HepG2 (cell line): ENCODE measurements at regions of chr7 and their contacts with region 1.

Region 1: DNA sequence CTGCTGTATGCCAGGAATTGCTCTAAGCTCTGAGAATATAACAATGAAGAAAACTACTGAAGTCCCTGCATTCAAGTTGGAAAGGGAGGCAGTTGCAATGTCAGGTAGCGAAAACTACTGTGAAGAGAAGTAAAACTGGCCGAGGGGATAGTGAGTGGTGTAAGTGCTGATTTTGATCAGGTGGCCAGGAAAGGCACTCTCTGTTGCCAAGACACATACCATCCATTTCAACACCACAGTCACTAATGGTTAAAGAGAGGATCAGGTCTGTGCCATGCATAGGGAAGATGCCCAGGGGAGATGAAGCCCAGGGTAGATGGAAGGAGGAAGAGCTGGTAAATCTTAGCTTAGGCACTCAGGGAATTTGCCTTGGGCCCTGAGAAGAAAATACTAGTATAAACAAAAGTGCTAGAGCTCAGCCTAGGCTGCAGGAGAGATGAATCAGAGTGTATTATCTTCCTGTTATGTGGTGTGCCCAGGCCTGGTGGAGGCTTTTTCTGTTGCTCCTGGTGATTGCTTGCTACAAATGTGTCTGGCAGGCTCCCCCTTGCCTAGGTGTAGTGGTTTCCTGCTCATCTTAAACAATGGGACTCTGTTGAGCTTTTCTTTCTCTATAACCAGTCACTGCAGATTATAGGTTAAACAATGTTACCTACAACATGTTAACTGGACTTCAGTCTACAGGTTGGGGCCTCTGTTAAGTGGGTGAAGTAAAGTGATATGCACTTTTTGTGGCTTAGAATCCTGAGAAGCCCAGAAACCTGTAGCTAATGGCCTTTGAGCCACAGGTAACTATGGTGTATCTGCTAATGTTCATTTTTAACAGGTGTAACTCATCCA is 125.5 kb downstream of the LRRC4 start:
- DNase-seq: peak; percentile 78
- ATAC-seq: peak; percentile 74
- H3K4me3 ChIP-seq: no peak overlapping the region; a peak in 1 of 6 replicates
- H3K27ac ChIP-seq: peak overlapping the region; percentile 54
- H3K4me1 ChIP-seq: peaks cover 74% of the 10 kb centered on the region
- H3K27me3 ChIP-seq: no peaks in the 10 kb centered on the region
- CTCF ChIP-seq: no peak
- EP300 ChIP-seq: 0 out of 4 replicates have a peak, but pooled peaks of 1 of the 2 experiments have one; percentile 9
- POLR2A ChIP-seq: no peak
- RAD21 ChIP-seq: no peak

Region 2: DNA sequence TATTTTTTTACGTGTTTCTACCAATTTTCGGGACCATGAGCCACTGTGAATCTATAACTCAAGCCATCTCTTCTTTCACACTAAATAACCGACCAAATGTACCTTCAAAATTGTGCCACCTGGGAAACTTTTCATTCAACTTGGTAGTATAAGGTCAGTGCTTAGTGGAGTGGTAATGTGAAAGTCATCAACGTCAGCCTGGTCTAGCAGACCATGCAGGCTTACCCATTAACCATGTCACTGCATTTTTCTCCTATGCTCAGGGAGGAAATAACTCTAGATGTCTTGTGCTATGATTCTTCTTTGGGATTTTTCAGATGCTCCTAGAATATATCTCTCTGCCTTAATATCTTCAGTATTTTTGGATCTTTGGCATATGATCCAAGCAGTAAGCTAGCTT is 1900.6 kb before region 1 on chr7:
- CTCF ChIA-PET with region 1: no interaction called
- POLR2A ChIA-PET with region 1: no interaction called
- in situ Hi-C with region 1: no loop called
- intact Hi-C with region 1: no loop called
- DNase-seq: no peak
- ATAC-seq: no peak
- H3K4me3 ChIP-seq: no peak overlapping the region
- H3K27ac ChIP-seq: no peak overlapping the region
- H3K4me1 ChIP-seq: no peaks in the 10 kb centered on the region
- H3K27me3 ChIP-seq: no peaks in the 10 kb centered on the region
- CTCF ChIP-seq: no peak
- EP300 ChIP-seq: no peak
- POLR2A ChIP-seq: no peak
- RAD21 ChIP-seq: no peak

Region 3: GRCh38 chr7:127927348-127927696 is 21.6 kb after region 1 on chr7:
- CTCF ChIA-PET with region 1: no interaction called
- POLR2A ChIA-PET with region 1: no interaction called
- in situ Hi-C with region 1: no loop called
- intact Hi-C with region 1: no loop called
- DNase-seq: peak; percentile 10
- ATAC-seq: no peak
- H3K4me3 ChIP-seq: no peak overlapping the region
- H3K27ac ChIP-seq: no peak overlapping the region
- H3K4me1 ChIP-seq: no peaks in the 10 kb centered on the region
- H3K27me3 ChIP-seq: no peaks in the 10 kb centered on the region
- CTCF ChIP-seq: no peak
- EP300 ChIP-seq: no peak
- POLR2A ChIP-seq: no peak
- RAD21 ChIP-seq: no peak

Region 4: GRCh38 chr7:128000854-128001265 is 95.1 kb after region 1 on chr7:
- CTCF ChIA-PET with region 1: no interaction called
- POLR2A ChIA-PET with region 1: no interaction called
- in situ Hi-C with region 1: no loop called
- intact Hi-C with region 1: loop called (anchors 10 kb)
- DNase-seq: peak; percentile 14
- ATAC-seq: no peak
- H3K4me3 ChIP-seq: no peak overlapping the region
- H3K27ac ChIP-seq: no peak overlapping the region
- H3K4me1 ChIP-seq: peaks cover 91% of the 10 kb centered on the region
- H3K27me3 ChIP-seq: no peaks in the 10 kb centered on the region
- CTCF ChIP-seq: no peak
- EP300 ChIP-seq: no peak
- POLR2A ChIP-seq: no peak
- RAD21 ChIP-seq: no peak